Pancreas (tissue), 10 donors: ENCODE measurements at regions of chr11 and their contacts with region 1.

Region 1: DNA sequence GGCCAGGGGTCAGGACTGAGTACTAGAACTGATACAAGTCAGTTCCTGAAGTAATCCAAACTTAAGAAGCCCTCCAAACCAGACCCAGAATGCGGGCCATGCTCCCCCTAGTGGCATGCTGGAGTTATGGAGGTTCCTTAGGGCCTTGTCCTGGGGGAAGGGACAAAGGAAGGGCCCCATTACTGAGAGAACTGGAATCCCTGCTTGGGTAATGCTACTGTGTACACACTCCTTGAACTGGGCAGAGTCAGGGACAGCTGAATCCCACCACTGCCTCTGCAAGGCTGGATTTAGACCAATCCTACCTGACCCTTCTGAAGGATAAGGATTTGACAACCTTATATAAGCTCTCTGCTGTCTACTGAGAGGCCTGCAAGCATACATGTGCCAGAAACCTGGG is 97.3 kb upstream of the AKIP1 start:
- DNase-seq: peak; percentile 52 to 77 (median 69)
- ATAC-seq: peak; percentile 41 to 62 (median 58)
- H3K4me3 ChIP-seq: no peak overlapping the region
- H3K27ac ChIP-seq: peak overlapping the region in 2 of 4 donors; percentile 10 to 56
- H3K4me1 ChIP-seq: peaks cover 0 to 33% (median 5%) of the 10 kb centered on the region in 3 donors
- H3K27me3 ChIP-seq: no peaks in the 10 kb centered on the region
- CTCF ChIP-seq: peak; percentile 58 to 76 (median 66)

Region 2: DNA sequence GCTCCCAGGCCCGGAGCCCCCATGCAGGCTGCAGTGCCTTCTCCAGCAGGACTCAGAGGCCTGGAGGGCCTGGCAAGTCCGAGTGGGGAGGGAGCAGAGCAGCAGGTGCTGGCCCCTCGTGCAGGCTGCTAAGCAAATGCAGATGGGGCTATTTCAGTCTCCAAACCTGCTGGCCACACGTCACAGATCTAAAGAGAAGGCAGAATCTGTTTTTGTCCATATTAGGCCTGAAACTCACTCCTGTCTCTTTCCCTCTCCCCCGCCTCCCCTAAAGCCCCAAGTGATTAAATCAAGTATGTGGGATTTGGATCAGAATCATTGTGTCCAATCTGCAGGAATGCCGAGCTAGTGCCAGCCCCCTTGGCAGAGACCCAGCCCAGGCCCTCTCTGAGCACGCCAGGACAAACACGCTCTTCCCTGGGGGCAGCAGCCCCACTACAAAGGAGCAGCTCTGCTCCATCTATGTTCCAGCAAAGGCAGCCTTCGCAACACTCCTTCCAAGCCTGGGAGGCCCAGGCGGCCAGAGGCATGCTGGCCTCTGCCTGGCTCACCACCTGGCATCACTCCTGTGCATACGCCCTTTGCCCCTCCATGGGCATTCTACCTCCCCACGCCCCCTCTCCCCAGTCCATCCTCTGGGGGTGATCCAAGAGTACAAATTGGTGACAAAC is 104.5 kb before region 1 on chr11:
- intact Hi-C with region 1: loop called in 1 of 3 experiments (anchors 10 kb)
- DNase-seq: peak in 4 of 6 donors; percentile 56 to 81 (median 72)
- ATAC-seq: peak in 3 of 4 donors; percentile 10 to 37 (median 25)
- H3K4me3 ChIP-seq: no peak overlapping the region
- H3K27ac ChIP-seq: peak overlapping the region; percentile 62 to 78 (median 66)
- H3K4me1 ChIP-seq: peaks cover 27 to 32% (median 29%) of the 10 kb centered on the region in 3 donors
- H3K27me3 ChIP-seq: no peaks in the 10 kb centered on the region
- CTCF ChIP-seq: no peak

Region 3: GRCh38 chr11:8937159-8937558 is 123.5 kb after region 1 on chr11:
- intact Hi-C with region 1: no loop called
- DNase-seq: no peak
- ATAC-seq: no peak
- H3K4me3 ChIP-seq: no peak overlapping the region
- H3K27ac ChIP-seq: no peak overlapping the region
- H3K4me1 ChIP-seq: no peaks in the 10 kb centered on the region
- H3K27me3 ChIP-seq: no peaks in the 10 kb centered on the region
- CTCF ChIP-seq: no peak